ENCODE measurements at regions of chr6 and their contacts with region 1.

Region 1: GRCh38 chr6:32819729-32820128 is 2.9 kb upstream of the HLA-DOB start:
- DNase-seq: peak; percentile 87
- H3K4me3 Mint-ChIP-seq: no peak overlapping the region
- H3K27ac Mint-ChIP-seq: peak overlapping the region; percentile 60
- H3K4me1 Mint-ChIP-seq: peaks cover 20% of the 10 kb centered on the region
- H3K27me3 Mint-ChIP-seq: no peaks in the 10 kb centered on the region
- CTCF ChIP-seq: no peak

Region 2: DNA sequence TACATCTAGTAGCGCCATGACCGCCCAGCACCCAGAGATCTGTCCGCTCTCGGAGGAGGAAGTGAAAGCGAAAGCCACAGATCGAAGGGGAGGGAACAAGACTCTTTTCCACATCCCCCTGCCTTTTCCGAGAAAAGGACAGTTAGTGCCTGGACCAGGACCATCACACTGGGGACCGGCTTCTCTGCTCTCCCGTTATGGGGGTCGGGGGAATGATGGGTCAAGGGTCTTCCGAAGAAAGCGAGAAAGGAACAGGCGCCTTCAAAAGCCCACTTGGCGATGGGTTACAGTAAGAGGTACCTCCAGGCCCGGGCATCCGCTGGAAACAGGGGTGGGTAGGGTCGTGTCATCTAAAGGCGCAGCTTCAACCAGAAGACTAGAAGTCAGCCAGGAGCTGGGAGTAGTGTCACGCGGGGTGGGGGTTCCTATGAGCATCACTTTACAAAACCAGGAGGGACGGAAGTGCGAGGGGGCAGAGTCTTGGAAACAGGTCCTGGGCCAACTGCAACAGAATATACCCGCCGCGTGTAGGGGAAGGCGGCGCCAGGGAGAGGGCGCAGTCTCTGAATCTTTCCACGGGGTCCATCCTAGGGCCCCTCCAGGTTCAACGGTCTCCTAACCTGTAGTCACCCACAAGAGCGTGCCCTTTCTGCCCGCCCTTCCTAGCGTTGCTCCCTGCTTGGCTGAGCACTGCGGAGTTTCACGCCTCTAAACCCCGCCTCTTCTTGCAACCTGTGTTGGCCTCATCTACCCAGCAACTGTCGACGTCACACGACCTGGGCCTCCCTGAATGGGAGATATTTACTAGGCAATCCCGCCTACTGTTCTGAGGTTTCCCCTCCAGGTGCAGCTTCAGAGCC is 24.5 kb after region 1 on chr6 and contains the start of gene PSMB8:
- CTCF ChIA-PET with region 1: interaction called, 25 read pairs
- POLR2A ChIA-PET with region 1: interaction called, 28 read pairs
- intact Hi-C with region 1: no loop called
- DNase-seq: peak; percentile 98
- H3K4me3 Mint-ChIP-seq: peak within 1 kb of the TSS; percentile 99
- H3K27ac Mint-ChIP-seq: peak within 1 kb of the TSS; percentile 96
- H3K4me1 Mint-ChIP-seq: peaks cover 30% of the 10 kb centered on the region
- H3K27me3 Mint-ChIP-seq: no peaks in the 10 kb centered on the region
- CTCF ChIP-seq: no peak
- total RNA-seq, gene PSMB8: 34.1 and 47.3 TPM in 2 replicates

Region 3: GRCh38 chr6:32853541-32854375 is 34.0 kb after region 1 on chr6 and contains the starts of genes PSMB9 and TAP1:
- CTCF ChIA-PET with region 1: interaction called, 6 read pairs
- POLR2A ChIA-PET with region 1: interaction called, 16 read pairs
- intact Hi-C with region 1: no loop called
- DNase-seq: peak; percentile 94
- H3K4me3 Mint-ChIP-seq: peak within 1 kb of the TSS; percentile 99
- H3K27ac Mint-ChIP-seq: peak within 1 kb of the TSS; percentile 94
- H3K4me1 Mint-ChIP-seq: peaks cover 21% of the 10 kb centered on the region
- H3K27me3 Mint-ChIP-seq: no peaks in the 10 kb centered on the region
- CTCF ChIP-seq: peak; percentile 51
- total RNA-seq, gene PSMB9: 3.5 and 4.4 TPM in 2 replicates
- total RNA-seq, gene TAP1: 32.3 and 35.2 TPM in 2 replicates

Measured in MCF 10A (cell line).